Calu3 (cell line): ENCODE measurements at regions of chr5 and their contacts with region 1.

Region 1: GRCh38 chr5:138128334-138128733 is 10.9 kb downstream of the NME5 start:
- DNase-seq: no peak
- H3K4me3 Mint-ChIP-seq: no peak overlapping the region
- H3K27ac Mint-ChIP-seq: no peak overlapping the region
- H3K4me1 Mint-ChIP-seq: no peaks in the 10 kb centered on the region
- H3K27me3 Mint-ChIP-seq: no peaks in the 10 kb centered on the region
- CTCF ChIP-seq: no peak

Region 2: DNA sequence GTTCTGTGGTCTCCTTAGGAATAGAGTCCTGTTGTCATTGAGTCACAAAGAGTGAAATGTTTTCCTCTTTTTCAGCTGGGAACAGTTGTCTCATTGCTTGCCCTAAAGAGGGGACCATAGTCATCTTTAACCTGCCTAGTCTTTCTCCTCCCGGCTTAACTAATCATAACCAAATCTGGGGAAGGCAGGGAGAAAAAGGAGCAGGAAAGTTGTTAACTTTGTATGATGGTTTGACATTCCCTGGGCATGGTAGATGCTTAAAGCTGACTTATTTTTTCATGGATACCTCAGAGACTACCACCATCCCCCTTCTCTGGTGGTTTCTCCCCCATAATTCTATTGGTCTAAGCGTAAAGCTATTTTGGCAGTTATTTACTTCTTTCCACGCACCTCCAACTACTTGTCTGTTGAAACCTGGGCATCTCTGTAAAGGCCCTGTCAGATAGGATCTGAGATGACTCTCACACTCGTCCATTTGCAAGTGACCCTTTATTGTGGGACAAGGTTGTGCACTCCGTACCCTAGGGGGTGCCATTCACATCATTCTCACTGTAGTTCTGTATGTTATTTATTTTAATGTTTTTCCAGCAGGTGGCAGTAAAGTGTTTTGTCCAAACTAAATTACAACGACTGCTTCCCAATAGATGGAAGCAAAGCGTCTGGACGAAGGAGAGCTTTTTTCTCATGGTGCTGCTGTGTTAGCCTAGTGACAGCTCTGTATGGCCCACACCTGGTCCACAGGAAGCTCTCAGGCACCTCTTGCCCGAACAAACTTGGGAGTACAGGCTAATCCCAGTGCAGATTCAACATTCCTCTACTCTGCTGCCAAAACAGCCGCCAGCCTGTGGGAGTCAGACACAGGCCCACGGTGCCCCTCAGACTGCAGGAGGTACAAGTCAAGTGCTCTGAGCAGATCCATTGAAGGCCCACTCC is 92.5 kb before region 1 on chr5:
- CTCF ChIA-PET with region 1: interaction called, 5 read pairs
- intact Hi-C with region 1: loop called (anchors 1 kb)
- DNase-seq: peak; percentile 80
- H3K4me3 Mint-ChIP-seq: no peak overlapping the region
- H3K27ac Mint-ChIP-seq: peak overlapping the region; percentile 59
- H3K4me1 Mint-ChIP-seq: peaks cover 22% of the 10 kb centered on the region
- H3K27me3 Mint-ChIP-seq: no peaks in the 10 kb centered on the region
- CTCF ChIP-seq: peak; percentile 87

Region 3: DNA sequence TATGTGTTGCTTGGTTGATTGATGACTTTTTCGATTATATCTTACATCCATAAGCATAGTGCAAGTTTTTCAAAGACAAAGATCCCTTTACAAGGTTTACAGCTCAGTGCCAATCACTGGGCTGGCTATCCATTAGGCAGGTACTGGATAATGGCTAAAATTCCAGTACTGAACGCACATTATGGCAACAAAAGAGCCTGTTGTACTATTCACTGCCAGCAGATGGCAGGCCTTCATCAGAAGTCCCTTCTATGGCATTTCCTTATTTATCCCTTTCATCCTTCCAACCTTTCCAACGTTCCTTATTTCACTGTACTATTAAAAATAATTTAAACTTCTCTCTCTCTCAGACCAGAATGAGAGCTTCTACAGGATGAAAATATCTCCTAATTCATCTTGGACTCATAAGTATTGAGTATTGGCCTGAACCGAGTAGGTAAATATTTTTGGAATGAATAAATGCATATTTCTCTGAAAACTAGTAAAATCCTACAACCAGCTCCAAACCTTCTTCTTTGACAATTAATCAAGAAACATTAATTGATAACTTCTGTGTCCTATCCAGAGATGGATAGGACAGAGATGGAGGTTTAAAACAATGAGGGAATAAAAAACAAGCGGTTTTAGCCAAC is 51.2 kb before region 1 on chr5:
- CTCF ChIA-PET with region 1: interaction called, 15 read pairs
- intact Hi-C with region 1: loop called (anchors 1 kb)
- DNase-seq: peak; percentile 70
- H3K4me3 Mint-ChIP-seq: no peak overlapping the region
- H3K27ac Mint-ChIP-seq: no peak overlapping the region
- H3K4me1 Mint-ChIP-seq: no peaks in the 10 kb centered on the region
- H3K27me3 Mint-ChIP-seq: no peaks in the 10 kb centered on the region
- CTCF ChIP-seq: peak; percentile 91